ENCODE measurements at regions of chr7 and their contacts with region 1.

Region 1: GRCh38 chr7:1664711-1665548 is 5.1 kb upstream of the ELFN1 start:
- DNase-seq: peak; percentile 30
- H3K4me3 ChIP-seq: peak overlapping the region in 2 of 3 experiments; percentile 29 to 43
- H3K27ac ChIP-seq: no peak overlapping the region
- H3K4me1 ChIP-seq: peaks cover 9% of the 10 kb centered on the region
- H3K27me3 ChIP-seq: peaks cover 32% of the 10 kb centered on the region
- CTCF ChIP-seq: peak; percentile 47 to 73

Region 2: GRCh38 chr7:1354661-1355221 is 310.2 kb before region 1 on chr7:
- CTCF ChIA-PET with region 1: interaction called, 16 read pairs
- dilution Hi-C with region 1: no loop called
- in situ Hi-C with region 1: no loop called
- intact Hi-C with region 1: no loop called
- DNase-seq: no peak
- H3K4me3 ChIP-seq: no peak overlapping the region
- H3K27ac ChIP-seq: no peak overlapping the region
- H3K4me1 ChIP-seq: no peaks in the 10 kb centered on the region
- H3K27me3 ChIP-seq: peaks cover 5% of the 10 kb centered on the region
- CTCF ChIP-seq: no peak

Region 3: DNA sequence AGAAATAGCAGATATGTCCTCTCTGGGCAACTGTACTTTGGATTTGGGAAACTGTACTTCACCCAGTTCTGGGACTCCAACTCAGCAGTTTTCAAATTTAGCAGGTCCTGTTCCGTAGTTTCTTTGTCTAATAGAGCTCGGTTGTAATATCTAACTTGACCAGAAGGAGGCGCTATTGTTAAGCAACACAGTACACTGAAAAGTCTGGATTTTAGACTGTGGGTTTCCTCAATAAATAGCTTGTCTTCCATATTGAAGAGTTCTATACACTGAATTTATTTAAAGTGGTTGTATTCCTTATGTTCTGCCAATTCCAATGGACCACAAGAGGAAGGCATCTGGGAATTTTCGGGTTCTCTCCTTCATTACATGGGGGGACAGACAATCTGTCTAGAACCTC is 45.0 kb after region 1 on chr7:
- CTCF ChIA-PET with region 1: no interaction called
- dilution Hi-C with region 1: no loop called
- in situ Hi-C with region 1: no loop called
- intact Hi-C with region 1: no loop called
- DNase-seq: no peak
- H3K4me3 ChIP-seq: no peak overlapping the region
- H3K27ac ChIP-seq: no peak overlapping the region
- H3K4me1 ChIP-seq: no peaks in the 10 kb centered on the region
- H3K27me3 ChIP-seq: no peaks in the 10 kb centered on the region
- CTCF ChIP-seq: peak; percentile 22 to 42

Region 4: DNA sequence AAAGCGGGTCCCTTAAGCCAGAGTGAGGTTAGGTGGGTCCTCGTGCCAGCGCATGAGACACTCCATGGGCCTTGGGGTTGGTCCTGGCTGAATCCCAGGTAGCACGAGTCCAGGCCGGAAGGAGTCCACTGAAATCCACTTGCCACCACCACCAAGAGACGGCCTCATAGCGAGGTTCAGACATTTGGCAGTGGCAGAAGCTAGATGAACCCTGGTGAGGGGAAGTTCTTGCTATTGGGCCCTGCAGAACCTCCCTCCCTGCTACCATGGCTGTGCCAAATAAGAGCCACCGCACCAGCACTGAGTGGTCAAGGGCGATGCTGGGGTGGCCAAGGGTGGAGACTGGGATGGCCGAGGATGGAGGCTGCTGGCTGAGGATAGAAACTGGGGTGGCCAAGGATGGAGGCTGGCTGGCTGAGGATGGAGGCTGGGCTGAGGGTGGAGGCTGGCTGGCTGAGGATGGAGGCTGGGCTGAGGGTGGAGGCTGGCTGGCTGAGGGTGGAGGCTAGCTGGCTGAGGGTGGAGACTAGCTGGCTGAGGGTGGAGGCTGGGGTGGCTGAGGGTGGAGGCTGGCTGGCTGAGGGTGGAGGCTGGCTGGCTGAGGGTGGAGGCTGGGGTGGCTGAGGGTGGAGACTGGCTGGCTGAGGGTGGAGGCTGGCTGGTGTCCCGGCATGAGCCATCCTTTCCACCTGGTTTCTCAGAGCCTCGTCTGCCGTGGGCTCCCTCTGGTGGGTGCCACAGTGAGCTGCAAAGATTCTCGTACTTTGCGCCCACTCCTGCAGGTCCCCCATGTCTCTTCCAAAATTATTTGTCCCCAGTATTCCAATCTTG is 93.3 kb after region 1 on chr7:
- CTCF ChIA-PET with region 1: no interaction called
- dilution Hi-C with region 1: no loop called
- in situ Hi-C with region 1: no loop called
- intact Hi-C with region 1: loop called (anchors 5 kb)
- DNase-seq: peak; percentile 11
- H3K4me3 ChIP-seq: no peak overlapping the region
- H3K27ac ChIP-seq: no peak overlapping the region
- H3K4me1 ChIP-seq: no peaks in the 10 kb centered on the region
- H3K27me3 ChIP-seq: no peaks in the 10 kb centered on the region
- CTCF ChIP-seq: peak in 1 of 2 donors; percentile 43

Region 5: DNA sequence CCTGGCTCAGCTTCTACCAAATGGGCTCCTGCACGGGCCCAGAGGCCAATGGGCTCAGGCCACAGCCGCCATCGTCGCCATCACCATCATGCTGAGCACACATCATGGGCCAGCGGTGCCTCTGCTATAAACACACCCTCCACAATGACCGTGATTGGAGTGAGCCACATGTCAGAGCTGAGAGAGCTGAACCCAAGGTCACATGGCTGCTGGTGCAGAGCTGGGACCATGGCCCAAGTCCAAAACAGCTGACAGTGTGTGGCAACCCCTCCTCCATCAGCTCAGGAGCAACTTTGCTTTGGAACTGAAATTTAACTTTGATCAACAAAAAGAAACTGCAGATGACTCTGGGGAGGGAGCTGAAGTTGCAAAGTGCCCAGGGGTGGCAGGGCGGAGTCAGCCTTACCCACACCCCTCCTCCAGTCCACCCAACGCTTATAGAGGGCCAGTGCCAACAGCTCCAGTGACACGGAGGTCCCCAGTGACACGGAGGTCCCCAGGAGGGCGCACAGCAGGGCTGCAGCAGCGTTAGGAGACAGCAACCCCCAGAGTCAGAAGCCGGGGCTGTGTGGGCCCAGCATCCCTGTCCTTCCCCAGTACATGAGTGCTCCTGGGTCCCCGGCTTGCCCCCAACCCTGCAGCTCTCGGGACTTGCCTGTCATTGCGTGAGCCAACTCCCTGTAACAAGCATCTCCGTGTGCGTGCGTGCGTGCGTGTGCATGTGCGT is 254.8 kb after region 1 on chr7:
- CTCF ChIA-PET with region 1: no interaction called
- dilution Hi-C with region 1: no loop called
- in situ Hi-C with region 1: no loop called
- intact Hi-C with region 1: loop called (anchors 10 kb)
- DNase-seq: no peak
- H3K4me3 ChIP-seq: no peak overlapping the region
- H3K27ac ChIP-seq: no peak overlapping the region
- H3K4me1 ChIP-seq: peaks cover 12% of the 10 kb centered on the region
- H3K27me3 ChIP-seq: no peaks in the 10 kb centered on the region
- CTCF ChIP-seq: no peak

Region 6: DNA sequence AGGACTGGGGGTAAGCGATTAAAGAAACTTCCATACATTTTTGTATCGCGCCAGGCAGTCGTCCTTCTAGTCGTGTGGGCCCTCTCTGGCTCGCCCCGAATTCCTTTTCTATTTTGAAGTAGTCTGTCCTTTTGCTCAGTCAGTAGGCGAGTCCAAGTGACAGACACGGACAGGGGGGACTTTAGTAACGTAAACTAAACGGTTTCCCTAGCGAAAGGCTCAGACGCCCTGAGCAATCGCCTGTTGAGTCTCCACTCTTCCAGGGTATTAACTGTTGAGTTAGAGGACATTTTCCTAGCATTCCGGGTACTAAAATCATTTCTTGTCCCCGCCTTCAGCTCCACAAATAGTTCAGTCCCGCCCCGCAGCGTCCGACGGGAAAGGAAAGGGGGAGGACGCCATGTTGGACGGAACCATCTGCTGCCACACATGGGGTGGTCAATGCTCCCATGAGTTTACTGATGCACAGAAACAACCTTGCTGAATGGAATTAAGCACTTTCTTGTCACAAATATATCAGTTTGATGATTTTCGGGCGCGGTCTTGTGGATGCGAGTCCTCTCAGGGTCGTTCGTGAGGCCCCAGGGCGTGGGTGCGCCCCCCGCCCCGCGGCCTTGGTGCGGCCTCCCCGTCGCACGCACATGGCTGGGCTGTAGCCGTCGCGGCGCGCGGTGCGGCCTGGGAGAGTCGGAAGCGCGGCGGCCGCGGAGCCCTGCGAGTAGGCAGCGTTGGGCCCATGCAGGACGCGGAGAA is 689.4 kb after region 1 on chr7 and contains the start of gene EIF3B:
- CTCF ChIA-PET with region 1: no interaction called
- dilution Hi-C with region 1: no loop called
- in situ Hi-C with region 1: no loop called
- intact Hi-C with region 1: loop called (anchors 5 kb)
- DNase-seq: peak; percentile 89
- H3K4me3 ChIP-seq: peak within 1 kb of the TSS; percentile 95 to 99 (median 97)
- H3K27ac ChIP-seq: peak within 1 kb of the TSS; percentile 99
- H3K4me1 ChIP-seq: peaks cover 15% of the 10 kb centered on the region
- H3K27me3 ChIP-seq: no peaks in the 10 kb centered on the region
- CTCF ChIP-seq: no peak
- total RNA-seq, gene EIF3B: 154 to 213 TPM

Measured in mammary epithelial cell (primary cell).